ENCODE measurements at regions of chr22 and their contacts with region 1.

Region 1: GRCh38 chr22:38766076-38766777 is 10.4 kb upstream of the SUN2 start:
- DNase-seq: peak; percentile 77
- H3K4me3 ChIP-seq: no peak overlapping the region
- H3K27ac ChIP-seq: no peak overlapping the region
- H3K4me1 ChIP-seq: no peaks in the 10 kb centered on the region
- H3K27me3 ChIP-seq: no peaks in the 10 kb centered on the region
- CTCF ChIP-seq: peak; percentile 77

Region 2: GRCh38 chr22:38715176-38715764 is 51.0 kb before region 1 on chr22:
- intact Hi-C with region 1: no loop called
- DNase-seq: no peak
- H3K4me3 ChIP-seq: no peak overlapping the region
- H3K27ac ChIP-seq: no peak overlapping the region
- H3K4me1 ChIP-seq: no peaks in the 10 kb centered on the region
- H3K27me3 ChIP-seq: no peaks in the 10 kb centered on the region
- CTCF ChIP-seq: no peak

Region 3: GRCh38 chr22:38733329-38733723 is 32.9 kb before region 1 on chr22:
- intact Hi-C with region 1: loop called (anchors 2 kb)
- DNase-seq: peak; percentile 76
- H3K4me3 ChIP-seq: no peak overlapping the region
- H3K27ac ChIP-seq: no peak overlapping the region
- H3K4me1 ChIP-seq: no peaks in the 10 kb centered on the region
- H3K27me3 ChIP-seq: no peaks in the 10 kb centered on the region
- CTCF ChIP-seq: peak; percentile 77

Region 4: DNA sequence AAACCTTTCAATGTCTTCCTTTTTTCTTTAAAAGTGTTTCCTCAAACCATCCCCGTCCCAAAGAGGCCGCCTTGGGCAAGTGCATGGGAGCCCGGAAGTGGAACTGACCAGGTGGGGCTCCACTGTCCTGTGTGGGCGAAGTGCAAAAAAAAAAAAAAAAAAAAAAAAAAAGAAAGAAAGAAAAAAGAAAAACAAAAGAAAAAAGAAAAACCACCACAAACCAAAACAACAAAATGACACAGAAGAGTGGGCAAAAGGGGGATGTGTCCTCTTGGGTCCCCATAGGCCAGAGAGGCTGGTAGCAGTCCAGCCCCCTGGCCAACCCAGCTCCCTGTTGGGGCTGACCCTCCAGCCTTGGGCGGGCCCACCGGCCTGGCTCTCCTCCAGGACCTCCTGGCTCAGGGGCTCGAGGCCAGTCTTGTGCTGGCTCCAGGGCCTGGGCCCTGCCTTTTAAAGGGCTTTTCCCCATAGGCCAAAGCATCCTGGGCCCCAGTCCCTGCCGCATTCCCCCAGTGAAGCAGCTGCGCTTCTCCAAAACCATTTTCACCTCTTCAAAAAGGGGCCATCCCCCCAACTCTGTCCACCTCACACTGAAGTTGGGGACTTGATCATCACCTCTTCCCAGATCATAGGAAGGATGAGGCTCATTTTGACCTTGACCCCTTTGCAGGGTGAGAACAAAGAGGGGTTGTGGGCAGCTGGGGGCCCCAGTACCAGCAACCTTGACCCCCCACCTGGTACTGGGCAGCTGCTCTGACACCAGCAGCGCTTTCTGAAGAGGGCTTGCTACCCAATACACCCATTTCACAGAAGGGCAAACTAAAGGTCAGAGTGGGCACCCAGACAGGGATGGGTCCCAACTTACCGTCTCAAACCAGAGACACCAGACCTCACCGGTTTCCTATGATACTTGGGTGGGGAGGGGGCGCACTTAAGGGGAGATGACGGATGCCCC is 96.4 kb after region 1 on chr22:
- intact Hi-C with region 1: loop called (anchors 5 kb)
- DNase-seq: no peak
- H3K4me3 ChIP-seq: no peak overlapping the region
- H3K27ac ChIP-seq: no peak overlapping the region
- H3K4me1 ChIP-seq: peaks cover 3% of the 10 kb centered on the region
- H3K27me3 ChIP-seq: no peaks in the 10 kb centered on the region
- CTCF ChIP-seq: no peak

Region 5: GRCh38 chr22:39117585-39118191 is 351.5 kb after region 1 on chr22:
- intact Hi-C with region 1: loop called (anchors 10 kb)
- DNase-seq: peak; percentile 70
- H3K4me3 ChIP-seq: no peak overlapping the region
- H3K27ac ChIP-seq: no peak overlapping the region
- H3K4me1 ChIP-seq: no peaks in the 10 kb centered on the region
- H3K27me3 ChIP-seq: no peaks in the 10 kb centered on the region
- CTCF ChIP-seq: peak; percentile 43